MCF 10A (cell line): ENCODE measurements at regions of chr1 and their contacts with region 1.

Region 1: GRCh38 chr1:27111626-27112573 is 43.0 kb downstream of the SLC9A1 start:
- DNase-seq: peak; percentile 99
- H3K4me3 Mint-ChIP-seq: peak overlapping the region; percentile 46
- H3K27ac Mint-ChIP-seq: peak overlapping the region; percentile 74
- H3K4me1 Mint-ChIP-seq: peaks cover 31% of the 10 kb centered on the region
- H3K27me3 Mint-ChIP-seq: no peaks in the 10 kb centered on the region
- CTCF ChIP-seq: peak; percentile 20

Region 2: GRCh38 chr1:27122652-27123051 is 10.8 kb after region 1 on chr1:
- CTCF ChIA-PET with region 1: interaction called, 17 read pairs
- POLR2A ChIA-PET with region 1: interaction called, 7 read pairs
- intact Hi-C with region 1: no loop called
- DNase-seq: peak; percentile 80
- H3K4me3 Mint-ChIP-seq: no peak overlapping the region
- H3K27ac Mint-ChIP-seq: peak overlapping the region; percentile 84
- H3K4me1 Mint-ChIP-seq: peaks cover 39% of the 10 kb centered on the region
- H3K27me3 Mint-ChIP-seq: no peaks in the 10 kb centered on the region
- CTCF ChIP-seq: no peak

Region 3: GRCh38 chr1:27145934-27146354 is 34.0 kb after region 1 on chr1:
- CTCF ChIA-PET with region 1: interaction called, 8 read pairs
- POLR2A ChIA-PET with region 1: interaction called, 69 read pairs
- intact Hi-C with region 1: no loop called
- DNase-seq: peak; percentile 72
- H3K4me3 Mint-ChIP-seq: no peak overlapping the region
- H3K27ac Mint-ChIP-seq: peak overlapping the region; percentile 90
- H3K4me1 Mint-ChIP-seq: peaks cover 56% of the 10 kb centered on the region
- H3K27me3 Mint-ChIP-seq: no peaks in the 10 kb centered on the region
- CTCF ChIP-seq: no peak